ENCODE measurements at regions of chr1 and their contacts with region 1.

Region 1: GRCh38 chr1:23496490-23497181 is 12.7 kb upstream of the ASAP3 start:
- DNase-seq: no peak
- ATAC-seq: no peak
- H3K4me3 Mint-ChIP-seq: no peak overlapping the region
- H3K27ac Mint-ChIP-seq: no peak overlapping the region
- H3K4me1 Mint-ChIP-seq: peaks cover 2% of the 10 kb centered on the region
- H3K27me3 Mint-ChIP-seq: peaks cover 11% of the 10 kb centered on the region

Region 2: GRCh38 chr1:23459338-23459757 is 37.3 kb before region 1 on chr1:
- CTCF ChIA-PET with region 1: interaction called, 11 read pairs
- POLR2A ChIA-PET with region 1: no interaction called
- DNase-seq: no peak
- ATAC-seq: no peak
- H3K4me3 Mint-ChIP-seq: no peak overlapping the region
- H3K27ac Mint-ChIP-seq: no peak overlapping the region
- H3K4me1 Mint-ChIP-seq: peaks cover 8% of the 10 kb centered on the region
- H3K27me3 Mint-ChIP-seq: peaks cover 10% of the 10 kb centered on the region

Region 3: DNA sequence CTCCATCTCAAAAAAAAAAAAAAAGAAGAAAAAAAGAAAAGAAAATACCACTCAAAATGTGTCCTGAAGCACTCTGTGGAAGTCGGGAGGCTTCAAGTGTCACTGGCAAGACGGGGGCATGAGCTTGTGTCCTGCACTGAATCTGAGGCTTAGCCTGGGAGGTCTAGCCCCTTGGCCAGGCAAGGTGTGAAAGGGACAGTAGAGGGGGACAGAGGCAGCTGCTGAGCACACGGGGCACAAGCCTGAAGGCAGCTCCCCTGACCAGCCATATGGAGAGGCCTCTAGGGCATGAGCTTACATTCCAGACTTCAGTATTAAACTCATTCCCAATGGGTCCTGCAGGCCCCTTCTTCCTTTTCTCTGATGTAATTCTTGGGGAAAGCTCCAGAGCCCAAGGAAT is 10.9 kb after region 1 on chr1:
- CTCF ChIA-PET with region 1: interaction called, 44 read pairs
- POLR2A ChIA-PET with region 1: interaction called, 4 read pairs
- DNase-seq: no peak
- ATAC-seq: no peak
- H3K4me3 Mint-ChIP-seq: no peak overlapping the region
- H3K27ac Mint-ChIP-seq: no peak overlapping the region
- H3K4me1 Mint-ChIP-seq: peaks cover 2% of the 10 kb centered on the region
- H3K27me3 Mint-ChIP-seq: no peaks in the 10 kb centered on the region

Region 4: GRCh38 chr1:23530747-23531561 is 34.3 kb after region 1 on chr1 and contains the start of gene E2F2:
- CTCF ChIA-PET with region 1: interaction called, 262 read pairs
- POLR2A ChIA-PET with region 1: interaction called, 15 read pairs
- DNase-seq: peak; percentile 90
- ATAC-seq: peak; percentile 76
- H3K4me3 Mint-ChIP-seq: peak within 1 kb of the TSS; percentile 96
- H3K27ac Mint-ChIP-seq: peak within 1 kb of the TSS; percentile 94
- H3K4me1 Mint-ChIP-seq: peaks cover 61% of the 10 kb centered on the region
- H3K27me3 Mint-ChIP-seq: no peaks in the 10 kb centered on the region
- total RNA-seq, gene E2F2: 75.0 to 80.3 TPM

Region 5: GRCh38 chr1:23643736-23644554 is 147.3 kb after region 1 on chr1:
- CTCF ChIA-PET with region 1: interaction called, 86 read pairs
- POLR2A ChIA-PET with region 1: no interaction called
- DNase-seq: no peak
- ATAC-seq: no peak
- H3K4me3 Mint-ChIP-seq: no peak overlapping the region
- H3K27ac Mint-ChIP-seq: no peak overlapping the region
- H3K4me1 Mint-ChIP-seq: no peaks in the 10 kb centered on the region
- H3K27me3 Mint-ChIP-seq: no peaks in the 10 kb centered on the region

Region 6: GRCh38 chr1:23664837-23665795 is 168.5 kb after region 1 on chr1:
- CTCF ChIA-PET with region 1: interaction called, 19 read pairs
- POLR2A ChIA-PET with region 1: no interaction called
- DNase-seq: peak; percentile 39
- ATAC-seq: peak; percentile 36
- H3K4me3 Mint-ChIP-seq: no peak overlapping the region
- H3K27ac Mint-ChIP-seq: peak overlapping the region; percentile 53
- H3K4me1 Mint-ChIP-seq: peaks cover 12% of the 10 kb centered on the region
- H3K27me3 Mint-ChIP-seq: no peaks in the 10 kb centered on the region